ENCODE measurements at regions of chr1 and their contacts with region 1.

Region 1: DNA sequence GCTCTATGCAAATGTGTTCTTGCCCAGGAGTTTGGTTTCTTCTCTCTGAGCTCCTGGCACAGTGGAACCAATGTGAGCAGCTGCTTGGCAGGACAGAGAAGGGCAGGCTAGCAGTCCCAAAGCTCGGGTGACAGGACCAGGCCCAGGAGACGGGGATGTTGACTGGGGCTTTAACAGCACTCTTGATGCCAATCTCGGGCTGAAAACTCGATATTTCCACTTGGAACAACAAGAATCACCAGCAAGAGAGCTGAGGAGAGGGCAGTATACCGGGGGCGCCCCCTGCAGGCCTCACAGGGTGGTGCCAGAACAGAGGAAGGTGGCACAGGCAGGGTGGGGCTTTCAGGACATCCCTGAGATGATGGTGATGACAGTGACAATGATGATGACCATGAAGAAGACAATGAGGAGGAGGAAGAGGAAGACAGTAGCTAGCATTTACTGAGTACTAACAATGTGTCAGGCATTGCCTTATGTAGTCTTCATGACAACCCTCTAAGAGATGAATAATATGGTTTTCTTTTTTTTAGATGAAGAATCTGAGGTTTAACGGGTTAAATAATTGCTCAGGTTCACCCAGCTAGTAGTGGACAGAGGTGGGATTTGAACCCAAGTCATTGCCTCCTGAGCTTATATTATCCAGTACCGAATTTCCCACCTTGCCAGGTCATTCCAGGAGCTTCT is 2.7 kb upstream of the KCNJ9 start:
- DNase-seq: peak; percentile 78
- H3K4me3 Mint-ChIP-seq: no peak overlapping the region
- H3K27ac Mint-ChIP-seq: no peak overlapping the region
- H3K4me1 Mint-ChIP-seq: no peaks in the 10 kb centered on the region
- H3K27me3 Mint-ChIP-seq: peaks cover 72% of the 10 kb centered on the region

Region 2: DNA sequence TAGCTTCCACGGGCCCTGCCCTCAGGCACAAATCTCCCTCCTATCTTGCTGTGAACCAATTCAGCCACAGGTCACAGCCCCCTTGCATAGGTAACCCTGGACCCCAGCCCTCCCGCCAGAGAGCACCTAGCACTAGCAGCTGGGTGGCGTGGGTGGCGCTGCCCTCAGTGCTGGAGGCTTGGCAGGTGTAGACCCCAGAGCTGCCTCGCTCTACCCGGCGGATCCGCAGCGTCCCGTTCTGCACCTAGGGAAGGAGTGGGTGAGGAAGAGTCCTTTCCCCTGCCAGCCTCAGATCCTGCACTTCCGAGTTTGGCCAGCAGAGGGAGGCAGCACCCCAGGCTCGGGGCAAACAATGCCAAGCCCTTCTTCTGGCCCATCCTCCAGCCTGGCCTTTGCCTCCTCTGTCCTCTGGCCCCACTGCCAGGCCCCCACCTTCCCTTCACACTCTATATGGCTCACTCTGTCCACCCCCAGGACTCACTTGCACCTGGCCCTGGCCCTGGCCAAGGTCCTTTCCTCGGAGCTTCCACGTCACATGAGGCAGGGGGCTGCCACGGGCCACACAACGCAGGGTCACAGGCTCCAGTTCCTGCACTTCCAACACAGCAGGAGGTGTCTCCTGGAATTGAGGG is 142.3 kb before region 1 on chr1:
- CTCF ChIA-PET with region 1: interaction called, 11 read pairs
- DNase-seq: peak; percentile 88
- H3K4me3 Mint-ChIP-seq: no peak overlapping the region
- H3K27ac Mint-ChIP-seq: no peak overlapping the region
- H3K4me1 Mint-ChIP-seq: peaks cover 23% of the 10 kb centered on the region
- H3K27me3 Mint-ChIP-seq: peaks cover 84% of the 10 kb centered on the region

Region 3: DNA sequence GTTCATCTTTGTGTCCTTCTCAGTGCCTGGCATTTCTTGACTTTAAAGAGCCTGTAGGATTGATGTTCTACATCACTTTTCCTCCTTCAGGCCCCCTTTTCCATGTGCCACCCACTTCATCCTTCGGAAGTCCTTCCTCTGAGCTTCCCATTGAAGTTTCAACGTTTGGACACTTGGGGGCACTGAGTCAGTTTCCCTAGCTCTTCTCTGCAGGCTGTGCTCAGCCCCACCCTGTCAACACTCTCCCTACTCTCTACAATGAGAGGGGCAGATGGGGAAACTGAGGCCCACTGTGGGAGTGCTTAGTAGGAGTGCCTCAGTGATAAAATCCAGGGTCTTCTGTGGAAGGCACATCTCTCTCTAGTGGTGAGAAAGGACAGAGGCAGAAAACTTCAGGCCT is 20.6 kb before region 1 on chr1:
- CTCF ChIA-PET with region 1: interaction called, 25 read pairs
- DNase-seq: no peak
- H3K4me3 Mint-ChIP-seq: no peak overlapping the region
- H3K27ac Mint-ChIP-seq: no peak overlapping the region
- H3K4me1 Mint-ChIP-seq: no peaks in the 10 kb centered on the region
- H3K27me3 Mint-ChIP-seq: peaks cover 76% of the 10 kb centered on the region

Region 4: GRCh38 chr1:160149716-160150115 is 71.1 kb after region 1 on chr1:
- CTCF ChIA-PET with region 1: no interaction called
- DNase-seq: no peak
- H3K4me3 Mint-ChIP-seq: no peak overlapping the region
- H3K27ac Mint-ChIP-seq: no peak overlapping the region
- H3K4me1 Mint-ChIP-seq: no peaks in the 10 kb centered on the region
- H3K27me3 Mint-ChIP-seq: peaks cover 31% of the 10 kb centered on the region